ENCODE measurements at regions of chr15 and their contacts with region 1.

Region 1: DNA sequence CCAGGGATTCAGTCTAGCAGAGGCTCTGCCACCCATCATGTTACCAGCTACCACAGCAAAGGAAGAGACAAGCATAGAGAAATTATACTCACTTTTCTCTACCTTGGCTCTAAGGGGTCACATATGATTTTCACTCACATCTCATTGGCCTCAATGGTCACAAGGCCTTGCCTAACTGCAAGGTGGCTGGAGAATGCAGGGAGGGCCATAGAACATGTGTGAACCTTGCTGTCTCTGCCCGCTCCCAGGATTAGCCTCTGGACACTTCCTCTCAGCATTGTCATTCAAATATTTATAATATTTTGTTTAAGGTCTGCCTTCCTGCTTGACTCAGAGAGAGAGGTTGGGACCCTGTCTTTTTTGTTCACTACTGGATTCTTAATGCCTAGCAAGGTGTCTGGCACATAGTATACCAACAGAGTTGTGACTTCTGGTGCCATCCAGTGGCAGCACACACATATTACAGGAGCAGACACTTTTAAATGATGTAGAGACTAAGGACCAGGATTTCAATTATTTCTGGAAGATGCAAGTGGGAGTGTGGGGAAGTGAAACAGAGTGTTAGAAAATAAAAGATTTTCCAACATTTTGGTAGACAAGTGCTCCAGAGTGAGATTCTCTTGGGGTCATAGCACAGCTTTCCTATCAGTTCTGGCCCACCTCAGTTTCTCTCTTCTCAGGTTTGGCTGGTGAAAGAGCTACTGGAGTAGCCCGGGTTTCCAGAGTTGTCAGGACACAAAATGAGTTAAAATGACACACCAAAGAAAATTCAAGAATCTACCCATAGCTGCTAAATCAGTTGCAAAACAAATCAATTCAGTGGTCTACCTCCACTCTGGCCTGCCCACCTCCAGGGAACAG is 119.0 kb upstream of the RASGRP1 start:
- DNase-seq: peak; percentile 37 to 88 (median 74)
- ATAC-seq: peak; percentile 62
- H3K4me3 ChIP-seq: no peak overlapping the region
- H3K4me3 Mint-ChIP-seq: peak overlapping the region; percentile 3
- H3K27ac ChIP-seq: peak overlapping the region in 1 of 2 experiments; percentile 15
- H3K27ac Mint-ChIP-seq: peak overlapping the region; percentile 91
- H3K4me1 ChIP-seq: peaks cover 60% of the 10 kb centered on the region
- H3K4me1 Mint-ChIP-seq: peaks cover 76% of the 10 kb centered on the region
- H3K27me3 ChIP-seq: no peaks in the 10 kb centered on the region
- H3K27me3 Mint-ChIP-seq: no peaks in the 10 kb centered on the region
- CTCF ChIP-seq: peak; percentile 93

Region 2: GRCh38 chr15:38474155-38474757 is 209.4 kb before region 1 on chr15:
- CTCF ChIA-PET with region 1: interaction called, 142 read pairs
- POLR2A ChIA-PET with region 1: no interaction called
- intact Hi-C with region 1: loop called in 1 of 2 experiments (anchors 1 kb)
- DNase-seq: peak in 7 of 9 experiments; percentile 13 to 85 (median 32)
- ATAC-seq: peak; percentile 99
- H3K4me3 ChIP-seq: no peak overlapping the region
- H3K4me3 Mint-ChIP-seq: no peak overlapping the region
- H3K27ac ChIP-seq: peak overlapping the region in 1 of 2 experiments; percentile 17
- H3K27ac Mint-ChIP-seq: peak overlapping the region; percentile 37
- H3K4me1 ChIP-seq: no peaks in the 10 kb centered on the region
- H3K4me1 Mint-ChIP-seq: peaks cover 9% of the 10 kb centered on the region
- H3K27me3 ChIP-seq: no peaks in the 10 kb centered on the region
- H3K27me3 Mint-ChIP-seq: no peaks in the 10 kb centered on the region
- CTCF ChIP-seq: peak; percentile 74

Region 3: GRCh38 chr15:38554354-38554753 is 129.3 kb before region 1 on chr15:
- CTCF ChIA-PET with region 1: interaction called, 420 read pairs
- POLR2A ChIA-PET with region 1: interaction called, 17 read pairs
- intact Hi-C with region 1: no loop called
- DNase-seq: peak in 3 of 9 experiments; percentile 34 to 72 (median 57)
- ATAC-seq: peak; percentile 60
- H3K4me3 ChIP-seq: no peak overlapping the region
- H3K4me3 Mint-ChIP-seq: peak overlapping the region; percentile 52
- H3K27ac ChIP-seq: peak overlapping the region in 1 of 2 experiments; percentile 71
- H3K27ac Mint-ChIP-seq: peak overlapping the region; percentile 91
- H3K4me1 ChIP-seq: peaks cover 92% of the 10 kb centered on the region
- H3K4me1 Mint-ChIP-seq: peaks cover 90% of the 10 kb centered on the region
- H3K27me3 ChIP-seq: no peaks in the 10 kb centered on the region
- H3K27me3 Mint-ChIP-seq: no peaks in the 10 kb centered on the region
- CTCF ChIP-seq: no peak

Region 4: GRCh38 chr15:38631126-38632075 is 52.2 kb before region 1 on chr15:
- CTCF ChIA-PET with region 1: interaction called, 29 read pairs
- POLR2A ChIA-PET with region 1: interaction called, 5 read pairs
- intact Hi-C with region 1: loop called in 1 of 2 experiments (anchors 10 kb)
- DNase-seq: no peak
- ATAC-seq: no peak
- H3K4me3 ChIP-seq: no peak overlapping the region
- H3K4me3 Mint-ChIP-seq: peak overlapping the region; percentile 1
- H3K27ac ChIP-seq: no peak overlapping the region
- H3K27ac Mint-ChIP-seq: peak overlapping the region; percentile 3
- H3K4me1 ChIP-seq: peaks cover 19% of the 10 kb centered on the region
- H3K4me1 Mint-ChIP-seq: peaks cover 26% of the 10 kb centered on the region
- H3K27me3 ChIP-seq: no peaks in the 10 kb centered on the region
- H3K27me3 Mint-ChIP-seq: no peaks in the 10 kb centered on the region
- CTCF ChIP-seq: no peak

Region 5: GRCh38 chr15:38652998-38653397 is 30.6 kb before region 1 on chr15:
- CTCF ChIA-PET with region 1: interaction called, 508 read pairs
- POLR2A ChIA-PET with region 1: interaction called, 88 read pairs
- intact Hi-C with region 1: loop called (anchors 1 kb)
- DNase-seq: peak; percentile 62 to 96 (median 80)
- ATAC-seq: peak; percentile 77
- H3K4me3 ChIP-seq: no peak overlapping the region
- H3K4me3 Mint-ChIP-seq: peak overlapping the region; percentile 56
- H3K27ac ChIP-seq: peak overlapping the region; percentile 59 to 60
- H3K27ac Mint-ChIP-seq: peak overlapping the region; percentile 96
- H3K4me1 ChIP-seq: peaks cover 74% of the 10 kb centered on the region
- H3K4me1 Mint-ChIP-seq: peaks cover 75% of the 10 kb centered on the region
- H3K27me3 ChIP-seq: no peaks in the 10 kb centered on the region
- H3K27me3 Mint-ChIP-seq: no peaks in the 10 kb centered on the region
- CTCF ChIP-seq: no peak